ENCODE measurements at regions of chr16 and their contacts with region 1.

Region 1: GRCh38 chr16:27203429-27204231 is at the start of gene KDM8:
- DNase-seq: peak; percentile 100
- ATAC-seq: peak; percentile 95
- H3K4me3 Mint-ChIP-seq: peak within 1 kb of the TSS; percentile 98
- H3K27ac Mint-ChIP-seq: peak within 1 kb of the TSS; percentile 99
- H3K4me1 Mint-ChIP-seq: peaks cover 59% of the 10 kb centered on the region
- H3K27me3 Mint-ChIP-seq: no peaks in the 10 kb centered on the region
- total RNA-seq, gene KDM8: 14.7 to 15.0 TPM

Region 2: GRCh38 chr16:27169511-27170071 is 34.0 kb before region 1 on chr16:
- CTCF ChIA-PET with region 1: interaction called, 16 read pairs
- POLR2A ChIA-PET with region 1: interaction called, 12 read pairs
- DNase-seq: peak; percentile 84
- ATAC-seq: peak; percentile 86
- H3K4me3 Mint-ChIP-seq: peak overlapping the region; percentile 15
- H3K27ac Mint-ChIP-seq: peak overlapping the region; percentile 72
- H3K4me1 Mint-ChIP-seq: peaks cover 58% of the 10 kb centered on the region
- H3K27me3 Mint-ChIP-seq: peaks cover 4% of the 10 kb centered on the region

Region 3: GRCh38 chr16:27222249-27223225 is 18.9 kb after region 1 on chr16:
- CTCF ChIA-PET with region 1: interaction called, 5 read pairs
- POLR2A ChIA-PET with region 1: interaction called, 15 read pairs
- DNase-seq: no peak
- ATAC-seq: no peak
- H3K4me3 Mint-ChIP-seq: no peak overlapping the region
- H3K27ac Mint-ChIP-seq: peak overlapping the region; percentile 34
- H3K4me1 Mint-ChIP-seq: peaks cover 19% of the 10 kb centered on the region
- H3K27me3 Mint-ChIP-seq: no peaks in the 10 kb centered on the region

Region 4: DNA sequence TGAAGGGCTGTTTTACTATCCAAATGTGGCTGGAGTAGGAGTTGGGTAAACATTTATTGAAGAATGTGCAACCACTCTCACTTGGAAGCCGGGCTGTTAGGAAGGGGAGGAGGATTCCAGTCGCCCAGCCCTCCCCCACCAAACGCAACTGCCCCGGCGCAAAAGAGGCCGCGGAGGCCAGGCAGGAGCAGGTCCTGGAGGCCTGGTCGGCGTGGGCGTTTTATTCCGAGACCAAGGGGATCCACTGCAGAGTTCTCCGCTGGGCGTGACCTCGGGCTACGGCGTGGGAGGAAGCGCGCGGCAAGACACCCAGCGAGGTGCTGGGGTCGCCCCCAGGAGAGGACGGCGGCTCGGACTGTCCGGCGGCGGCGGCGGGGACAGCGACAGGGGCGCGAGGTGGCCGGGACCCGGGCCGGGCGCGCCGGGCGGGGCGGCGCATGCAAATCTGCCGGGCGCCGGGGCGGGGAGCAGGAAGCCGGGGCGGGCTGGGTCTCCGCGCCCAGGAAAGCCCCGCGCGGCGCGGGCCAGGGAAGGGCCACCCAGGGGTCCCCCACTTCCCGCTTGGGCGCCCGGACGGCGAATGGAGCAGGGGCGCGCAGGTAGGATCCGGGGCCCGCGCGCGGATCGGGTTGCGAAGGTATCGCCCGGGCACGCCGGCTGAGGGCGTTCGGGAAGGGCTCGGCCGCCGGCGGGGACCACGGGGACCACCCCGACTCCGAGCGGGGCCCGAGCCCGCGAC is 110.0 kb after region 1 on chr16 and contains the start of gene IL4R:
- CTCF ChIA-PET with region 1: interaction called, 10 read pairs
- POLR2A ChIA-PET with region 1: interaction called, 11 read pairs
- DNase-seq: peak; percentile 66
- ATAC-seq: peak; percentile 49
- H3K4me3 Mint-ChIP-seq: peak within 1 kb of the TSS; percentile 90
- H3K27ac Mint-ChIP-seq: peak within 1 kb of the TSS; percentile 93
- H3K4me1 Mint-ChIP-seq: peaks cover 48% of the 10 kb centered on the region
- H3K27me3 Mint-ChIP-seq: peaks cover 2% of the 10 kb centered on the region
- total RNA-seq, gene IL4R: 231 to 237 TPM

Region 5: DNA sequence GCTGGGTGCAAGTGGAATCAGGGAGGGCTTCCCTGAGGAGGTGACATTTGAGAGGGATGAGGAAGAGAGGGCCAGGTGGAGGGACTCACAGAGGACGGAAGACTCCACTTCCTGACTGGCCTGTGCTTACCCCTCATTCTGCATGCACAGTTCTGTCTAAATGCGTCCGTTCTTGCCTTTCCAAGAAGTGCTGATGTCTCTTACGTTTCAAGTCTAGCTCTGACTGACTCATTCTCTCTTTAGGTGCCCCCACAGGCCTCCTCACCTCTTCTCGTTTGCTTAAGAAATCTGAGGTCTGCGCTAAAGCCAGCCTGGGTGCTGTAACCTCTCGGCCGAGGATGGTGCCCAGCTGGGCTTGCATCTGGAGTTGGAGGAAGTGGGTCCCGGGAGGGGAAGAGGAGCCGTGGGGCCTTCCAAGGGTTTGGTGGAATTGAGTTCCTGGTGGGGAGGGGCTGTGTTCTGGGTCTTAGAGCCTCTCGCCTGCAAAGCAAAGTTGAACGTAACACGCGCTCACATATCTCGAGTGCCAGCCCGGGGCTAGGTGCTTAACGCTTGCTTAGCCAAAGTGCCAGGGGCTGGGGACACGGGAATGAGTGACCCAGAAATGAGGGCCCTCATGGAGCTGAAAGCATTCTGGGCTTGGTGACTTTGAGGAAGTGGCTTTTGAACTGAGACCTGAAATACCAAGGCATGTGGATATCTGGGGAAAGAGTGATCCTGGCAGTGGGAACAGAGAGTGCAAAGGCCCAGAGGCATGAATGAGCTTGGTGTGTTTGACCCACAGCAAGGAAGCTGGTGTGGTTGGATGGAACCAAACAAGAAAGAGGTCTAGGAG is 115.0 kb after region 1 on chr16:
- CTCF ChIA-PET with region 1: interaction called, 10 read pairs
- POLR2A ChIA-PET with region 1: interaction called, 11 read pairs
- DNase-seq: peak; percentile 80
- ATAC-seq: peak; percentile 67
- H3K4me3 Mint-ChIP-seq: peak overlapping the region; percentile 90
- H3K27ac Mint-ChIP-seq: peak overlapping the region; percentile 93
- H3K4me1 Mint-ChIP-seq: peaks cover 81% of the 10 kb centered on the region
- H3K27me3 Mint-ChIP-seq: no peaks in the 10 kb centered on the region

Measured in activated CD8-positive, alpha-beta T cell treated with anti-CD3 and anti-CD28 coated beads, Interleukin-2, amount 10 ng/mL, durations not matched to agents 7 days and 5 days (primary cell).